MCF 10A (cell line): ENCODE measurements at regions of chr20 and their contacts with region 1.

Region 1: GRCh38 chr20:5191829-5192569 is 65.2 kb downstream of the CDS2 start:
- DNase-seq: peak; percentile 81
- H3K4me3 Mint-ChIP-seq: no peak overlapping the region
- H3K27ac Mint-ChIP-seq: no peak overlapping the region
- H3K4me1 Mint-ChIP-seq: no peaks in the 10 kb centered on the region
- H3K27me3 Mint-ChIP-seq: no peaks in the 10 kb centered on the region
- CTCF ChIP-seq: peak; percentile 81

Region 2: GRCh38 chr20:5119435-5120188 is 72.4 kb before region 1 on chr20 and contains the start of gene PCNA:
- CTCF ChIA-PET with region 1: interaction called, 162 read pairs
- POLR2A ChIA-PET with region 1: interaction called, 6 read pairs
- intact Hi-C with region 1: no loop called
- DNase-seq: peak; percentile 98
- H3K4me3 Mint-ChIP-seq: peak within 1 kb of the TSS; percentile 90
- H3K27ac Mint-ChIP-seq: peak within 1 kb of the TSS; percentile 92
- H3K4me1 Mint-ChIP-seq: peaks cover 21% of the 10 kb centered on the region
- H3K27me3 Mint-ChIP-seq: no peaks in the 10 kb centered on the region
- CTCF ChIP-seq: no peak
- total RNA-seq, gene PCNA: 38.2 and 45.5 TPM in 2 replicates

Region 3: DNA sequence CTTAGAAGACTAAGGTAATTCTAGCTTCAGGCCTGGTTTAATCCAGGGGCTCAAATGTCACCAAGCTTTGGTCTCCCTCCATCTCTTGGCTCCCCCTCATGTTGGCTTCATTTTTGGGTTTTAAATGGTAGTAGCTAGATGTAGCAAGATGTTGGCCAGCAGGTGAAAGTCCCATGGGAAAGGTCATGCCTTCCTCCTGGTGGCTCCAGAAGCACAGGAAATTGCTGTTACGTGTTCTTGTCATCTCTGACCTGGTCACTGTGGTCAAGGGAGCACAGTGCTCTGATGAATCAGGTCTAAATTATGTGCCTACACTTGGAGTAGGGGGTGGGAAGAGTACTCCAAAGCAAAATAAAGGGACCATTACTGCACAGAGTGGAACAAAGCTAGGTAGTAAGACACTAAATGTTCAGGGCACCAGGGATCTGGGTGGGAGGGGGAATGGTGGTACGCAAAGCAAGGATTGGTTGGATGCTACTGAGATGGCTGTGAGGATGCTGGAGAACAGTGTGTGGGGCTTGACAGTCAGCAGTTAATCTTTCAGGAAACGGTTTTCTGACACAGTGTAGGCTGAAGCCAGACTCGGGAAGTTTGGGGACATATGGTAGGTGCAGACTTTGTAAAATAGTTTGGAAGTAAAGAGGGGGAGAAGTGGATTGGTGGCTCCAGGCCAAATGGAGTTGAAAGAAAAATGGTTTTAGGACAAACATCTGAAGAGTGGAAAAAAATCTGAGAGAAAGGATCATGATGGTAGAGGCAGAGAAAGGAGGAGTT is 35.1 kb before region 1 on chr20:
- CTCF ChIA-PET with region 1: interaction called, 48 read pairs
- POLR2A ChIA-PET with region 1: no interaction called
- intact Hi-C with region 1: no loop called
- DNase-seq: peak; percentile 22
- H3K4me3 Mint-ChIP-seq: no peak overlapping the region
- H3K27ac Mint-ChIP-seq: peak overlapping the region; percentile 57
- H3K4me1 Mint-ChIP-seq: peaks cover 29% of the 10 kb centered on the region
- H3K27me3 Mint-ChIP-seq: no peaks in the 10 kb centered on the region
- CTCF ChIP-seq: no peak

Region 4: DNA sequence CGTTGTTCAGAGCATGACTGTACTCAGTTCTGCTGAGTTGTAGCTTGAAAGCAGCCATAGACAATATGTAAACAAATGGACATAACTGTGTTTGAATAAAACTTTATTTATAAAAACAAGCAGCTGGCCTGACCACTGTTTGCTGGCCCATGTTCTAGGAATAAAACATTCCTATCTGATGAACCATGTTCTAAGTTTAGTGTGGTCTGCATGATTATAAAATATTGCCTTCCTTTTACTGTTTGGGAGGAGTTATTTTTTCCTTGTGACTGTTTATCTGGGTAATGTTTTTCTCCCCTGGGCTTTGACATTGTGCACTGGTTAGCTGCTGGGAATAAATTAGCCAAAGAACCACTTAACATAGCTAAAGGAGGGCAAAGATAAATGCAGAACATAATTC is 10.0 kb before region 1 on chr20:
- CTCF ChIA-PET with region 1: interaction called, 65 read pairs
- POLR2A ChIA-PET with region 1: interaction called, 3 read pairs
- intact Hi-C with region 1: no loop called
- DNase-seq: no peak
- H3K4me3 Mint-ChIP-seq: no peak overlapping the region
- H3K27ac Mint-ChIP-seq: no peak overlapping the region
- H3K4me1 Mint-ChIP-seq: no peaks in the 10 kb centered on the region
- H3K27me3 Mint-ChIP-seq: no peaks in the 10 kb centered on the region
- CTCF ChIP-seq: no peak

Region 5: DNA sequence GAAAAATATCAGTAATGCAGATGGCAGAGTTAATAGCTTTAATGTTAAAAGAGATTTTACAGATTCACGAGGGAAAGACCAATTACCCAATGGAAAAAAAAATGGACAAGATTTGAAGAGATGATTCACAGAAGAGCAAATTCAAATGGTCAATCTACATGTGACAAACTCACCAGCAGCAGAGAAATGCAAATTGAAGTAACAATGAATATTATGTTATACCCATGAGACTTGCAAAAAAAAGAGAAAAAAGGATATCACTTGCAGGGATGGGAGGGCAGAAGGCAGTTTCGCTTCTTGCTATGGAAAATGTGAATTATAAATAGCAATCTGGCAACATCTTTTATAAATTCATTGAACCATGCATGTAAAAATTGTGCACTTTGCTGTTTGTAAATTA is 68.9 kb after region 1 on chr20:
- CTCF ChIA-PET with region 1: no interaction called
- POLR2A ChIA-PET with region 1: no interaction called
- intact Hi-C with region 1: no loop called
- DNase-seq: no peak
- H3K4me3 Mint-ChIP-seq: no peak overlapping the region
- H3K27ac Mint-ChIP-seq: no peak overlapping the region
- H3K4me1 Mint-ChIP-seq: no peaks in the 10 kb centered on the region
- H3K27me3 Mint-ChIP-seq: peaks cover 94% of the 10 kb centered on the region
- CTCF ChIP-seq: no peak